ENCODE measurements at regions of chr15 and their contacts with region 1.

Region 1: DNA sequence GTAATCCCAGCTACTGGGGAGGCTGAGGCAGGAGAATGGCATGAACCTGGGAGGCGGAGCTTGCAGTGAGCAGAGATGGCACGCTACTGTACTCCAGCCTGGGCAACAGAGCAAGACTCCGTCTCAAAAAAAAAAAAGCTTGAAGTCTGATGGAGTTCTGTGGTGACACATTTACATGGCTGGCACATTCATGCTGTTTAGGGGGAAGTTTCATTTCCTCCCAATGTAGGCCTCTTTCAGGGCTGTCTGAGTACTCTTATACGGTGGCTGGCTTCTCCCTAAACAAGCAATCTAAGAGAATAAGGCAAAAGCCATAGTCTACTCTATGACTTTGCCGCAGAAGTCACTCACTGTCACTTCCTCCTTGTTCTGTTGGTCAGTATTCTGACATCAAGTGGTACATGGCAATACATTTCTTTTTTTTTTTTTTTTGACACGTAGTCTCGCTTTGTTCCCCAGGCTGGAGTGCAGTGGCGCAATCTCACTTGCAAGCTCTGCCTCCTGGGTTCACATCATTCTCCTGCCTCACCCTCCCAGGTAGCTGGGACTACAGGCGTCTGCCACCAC is 41.2 kb downstream of the OIP5 start:
- DNase-seq: no peak
- H3K4me3 ChIP-seq: no peak overlapping the region
- H3K27ac ChIP-seq: no peak overlapping the region
- H3K4me1 ChIP-seq: no peaks in the 10 kb centered on the region
- H3K27me3 ChIP-seq: no peaks in the 10 kb centered on the region
- CTCF ChIP-seq: no peak
- EP300 ChIP-seq: no peak
- POLR2A ChIP-seq: peak in 1 of 2 experiments; percentile 11; a peak in 1 of 3 replicates
- RAD21 ChIP-seq: no peak

Region 2: DNA sequence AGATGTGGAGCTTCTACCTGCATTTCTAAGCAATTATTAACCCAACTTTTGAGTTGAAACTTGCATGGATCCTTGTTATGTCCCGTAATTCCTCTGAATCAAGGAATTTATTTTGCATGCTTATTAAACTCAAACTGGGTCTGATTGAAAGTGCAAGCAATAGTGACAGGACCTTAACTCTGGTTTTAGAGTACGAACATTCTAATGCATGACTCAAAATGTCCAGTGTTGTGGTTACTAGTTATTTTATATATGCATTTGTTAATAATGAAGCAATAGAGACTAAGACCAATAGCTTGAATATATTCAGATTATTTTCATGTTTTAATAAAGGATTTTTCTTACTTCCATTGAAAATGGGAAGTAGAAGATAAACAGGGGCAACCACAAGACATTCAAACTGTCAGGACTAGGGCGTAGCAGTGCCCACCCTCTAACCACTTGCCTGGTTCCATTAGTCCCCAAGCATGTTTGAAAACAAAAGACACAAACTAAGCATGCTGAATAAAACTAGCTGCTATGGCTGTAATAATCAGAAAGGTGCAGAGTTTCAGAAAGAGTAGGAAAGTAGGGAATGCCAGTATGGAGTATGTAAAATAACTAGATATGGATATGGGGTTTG is 13.1 kb after region 1 on chr15:
- CTCF ChIA-PET with region 1: interaction called, 4 read pairs
- POLR2A ChIA-PET with region 1: interaction called, 15 read pairs
- DNase-seq: no peak
- H3K4me3 ChIP-seq: no peak overlapping the region
- H3K27ac ChIP-seq: no peak overlapping the region
- H3K4me1 ChIP-seq: peaks cover 0 to 11% (median 2%) of the 10 kb centered on the region in 4 experiments; a peak in 3 of 7 replicates
- H3K27me3 ChIP-seq: no peaks in the 10 kb centered on the region
- CTCF ChIP-seq: no peak
- EP300 ChIP-seq: no peak
- POLR2A ChIP-seq: no peak
- RAD21 ChIP-seq: no peak

Region 3: GRCh38 chr15:41309226-41309905 is 18.2 kb after region 1 on chr15:
- CTCF ChIA-PET with region 1: interaction called, 4 read pairs
- POLR2A ChIA-PET with region 1: interaction called, 12 read pairs
- DNase-seq: no peak
- H3K4me3 ChIP-seq: no peak overlapping the region
- H3K27ac ChIP-seq: no peak overlapping the region
- H3K4me1 ChIP-seq: no peaks in the 10 kb centered on the region
- H3K27me3 ChIP-seq: no peaks in the 10 kb centered on the region
- CTCF ChIP-seq: no peak
- EP300 ChIP-seq: no peak
- POLR2A ChIP-seq: no peak
- RAD21 ChIP-seq: no peak

Region 4: DNA sequence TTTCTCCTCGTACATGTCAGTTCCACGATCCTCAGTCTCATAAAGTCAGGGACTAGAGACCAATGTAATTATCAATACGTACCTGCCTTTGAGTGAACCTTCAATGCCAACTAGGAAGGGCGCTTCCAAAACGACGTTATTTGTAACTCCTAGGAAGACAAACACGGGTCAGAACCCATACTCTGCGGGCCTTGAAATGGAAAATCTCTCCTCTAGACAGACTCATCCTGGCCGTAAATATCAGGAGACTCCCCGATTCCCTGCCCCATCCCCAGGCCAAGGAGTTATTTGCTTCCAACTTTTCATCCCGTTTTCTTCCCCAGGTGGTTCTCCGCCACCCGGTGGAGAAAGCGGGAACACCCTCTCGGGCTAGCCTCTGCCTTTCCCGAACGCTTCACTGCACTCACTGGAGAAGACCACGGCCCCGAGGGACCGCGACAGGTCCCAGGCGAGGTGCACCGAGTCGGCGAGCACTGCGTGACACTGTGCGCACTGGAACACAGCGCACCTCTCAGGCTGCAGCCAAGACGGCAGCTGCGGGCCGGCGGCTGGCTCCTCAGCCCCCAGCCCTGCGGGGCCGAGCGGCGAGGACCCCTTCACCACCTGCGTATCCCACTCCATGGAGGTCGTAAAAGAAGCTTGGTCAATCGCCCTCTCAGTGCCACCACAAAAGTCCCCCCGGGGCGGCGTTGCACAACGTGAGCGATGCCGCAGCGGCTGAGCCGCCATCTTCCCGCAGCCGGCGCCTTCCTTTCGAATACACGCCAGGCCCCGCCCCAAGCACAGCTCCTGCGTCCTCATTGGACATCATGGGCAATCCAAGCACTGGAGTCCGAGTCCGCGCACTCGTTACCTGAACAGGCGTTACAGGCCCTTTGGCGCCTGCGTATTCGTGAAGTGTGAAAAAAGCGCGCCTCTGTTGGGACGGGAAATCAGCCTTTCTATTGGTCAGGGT is 41.0 kb after region 1 on chr15 and contains the start of gene OIP5:
- CTCF ChIA-PET with region 1: interaction called, 6 read pairs
- POLR2A ChIA-PET with region 1: interaction called, 18 read pairs
- DNase-seq: peak; percentile 93 to 98
- H3K4me3 ChIP-seq: peak within 1 kb of the TSS; percentile 83 to 92 (median 90)
- H3K27ac ChIP-seq: peak within 1 kb of the TSS; percentile 90
- H3K4me1 ChIP-seq: no peaks in the 10 kb centered on the region; a peak in 1 of 7 replicates
- H3K27me3 ChIP-seq: no peaks in the 10 kb centered on the region
- CTCF ChIP-seq: peak; percentile 61 to 69 (median 62)
- EP300 ChIP-seq: no peak
- POLR2A ChIP-seq: peak; percentile 96 to 98
- RAD21 ChIP-seq: peak; percentile 59 to 61
- total RNA-seq, gene OIP5: 34.8 and 36.7 TPM in 2 replicates

Measured in H1 (cell line).